Activated CD4-positive, alpha-beta memory T cell treated with anti-CD3 and anti-CD28 coated beads for 36 hours (primary cell): ENCODE measurements at regions of chr10 and their contacts with region 1.

Region 1: DNA sequence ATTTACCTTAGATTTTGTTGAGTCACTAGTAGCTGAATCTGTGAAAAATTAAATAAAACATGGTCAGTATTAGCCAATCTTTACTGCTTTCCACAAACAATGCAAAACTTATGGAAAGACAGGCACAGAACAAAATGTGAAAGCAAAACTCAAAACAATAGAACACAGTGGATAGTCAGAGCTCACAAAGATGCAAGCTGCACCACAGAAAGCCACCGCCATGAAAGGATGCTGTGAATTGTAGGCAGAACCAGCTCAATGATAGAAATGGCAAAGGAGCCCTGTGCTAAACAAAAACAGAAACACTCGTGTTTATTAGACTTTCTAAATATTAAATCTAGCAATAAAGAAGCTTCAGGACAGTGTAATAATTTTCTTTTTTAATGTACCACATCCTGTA is 134.4 kb downstream of the ARHGAP21 start:
- DNase-seq: no peak
- H3K4me3 Mint-ChIP-seq: no peak overlapping the region
- H3K27ac Mint-ChIP-seq: no peak overlapping the region
- H3K4me1 Mint-ChIP-seq: peaks cover 5% of the 10 kb centered on the region
- H3K27me3 Mint-ChIP-seq: no peaks in the 10 kb centered on the region

Region 2: GRCh38 chr10:24556750-24557742 is 32.2 kb before region 1 on chr10:
- CTCF ChIA-PET with region 1: no interaction called
- POLR2A ChIA-PET with region 1: no interaction called
- intact Hi-C with region 1: no loop called
- DNase-seq: no peak
- H3K4me3 Mint-ChIP-seq: no peak overlapping the region
- H3K27ac Mint-ChIP-seq: no peak overlapping the region
- H3K4me1 Mint-ChIP-seq: no peaks in the 10 kb centered on the region
- H3K27me3 Mint-ChIP-seq: no peaks in the 10 kb centered on the region

Region 3: DNA sequence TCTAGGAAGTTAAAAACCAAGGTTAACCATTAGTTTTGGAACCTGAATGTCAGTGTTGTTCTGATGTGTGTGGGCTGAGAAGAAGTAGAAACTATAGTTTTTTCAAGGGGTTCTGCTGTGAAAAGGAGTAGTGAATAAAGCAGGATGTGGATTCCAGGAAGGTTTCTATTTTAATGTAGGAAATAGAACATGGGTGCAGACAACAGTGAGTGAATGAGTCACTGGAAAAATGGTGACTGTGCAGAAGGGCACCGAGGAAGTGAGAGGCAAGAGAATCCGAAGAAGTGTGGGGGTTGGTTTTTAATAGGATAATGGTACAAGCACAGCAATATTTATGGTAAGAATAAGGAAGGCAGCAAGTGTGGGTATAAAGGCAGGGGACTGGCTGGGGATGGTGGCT is 14.1 kb after region 1 on chr10:
- CTCF ChIA-PET with region 1: no interaction called
- POLR2A ChIA-PET with region 1: no interaction called
- intact Hi-C with region 1: loop called (anchors 1 kb)
- DNase-seq: peak; percentile 43
- H3K4me3 Mint-ChIP-seq: no peak overlapping the region
- H3K27ac Mint-ChIP-seq: peak overlapping the region; percentile 72
- H3K4me1 Mint-ChIP-seq: peaks cover 15% of the 10 kb centered on the region
- H3K27me3 Mint-ChIP-seq: no peaks in the 10 kb centered on the region